CD4-positive, alpha-beta T cell (primary cell): ENCODE measurements at regions of chr1 and their contacts with region 1.

Region 1: DNA sequence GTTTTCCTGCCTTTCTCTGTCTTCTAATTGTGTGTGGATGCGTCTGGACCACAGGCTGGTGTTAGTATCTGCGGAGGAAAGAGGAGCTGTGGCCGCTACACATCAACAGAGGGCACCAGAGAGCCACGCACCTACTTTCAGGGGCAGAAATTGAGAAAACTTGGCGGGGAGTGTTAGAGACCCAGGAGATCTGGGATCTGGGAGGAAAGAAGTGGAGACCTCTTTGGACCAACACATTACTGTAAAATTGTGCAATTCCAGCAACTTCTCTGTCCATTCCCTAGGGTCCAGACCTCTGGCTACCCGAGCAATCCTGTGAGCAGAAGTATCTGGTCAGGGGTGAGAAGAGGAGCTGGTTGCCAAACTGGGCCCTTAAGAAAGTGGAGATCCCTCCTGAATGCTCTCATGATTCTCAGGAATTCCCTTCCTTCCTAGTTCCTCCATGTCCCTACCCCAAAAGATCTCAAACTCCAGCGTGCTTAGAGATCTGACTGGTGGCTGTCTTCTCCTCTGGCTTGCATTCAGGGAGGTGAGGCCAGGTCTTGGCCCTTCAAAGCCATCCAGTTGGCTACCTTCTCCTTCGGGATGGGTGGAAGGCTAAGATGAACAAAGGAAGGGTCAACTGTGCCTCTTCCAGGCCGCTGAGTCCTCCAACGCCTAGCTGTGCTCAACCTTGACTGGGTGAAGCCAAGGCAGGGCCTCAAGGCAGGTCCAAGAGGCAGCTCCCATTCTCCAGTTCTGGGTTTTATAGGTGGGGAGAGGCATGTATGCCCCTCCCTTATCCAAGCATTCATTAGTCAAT is 1.2 kb upstream of the KIRREL1 start:
- DNase-seq: peak in 12 of 14 experiments; percentile 5 to 54 (median 16)
- ATAC-seq: peak; percentile 48
- H3K4me3 ChIP-seq: no peak overlapping the region
- H3K4me3 Mint-ChIP-seq: no peak overlapping the region
- H3K27ac ChIP-seq: no peak overlapping the region
- H3K27ac Mint-ChIP-seq: no peak overlapping the region
- H3K4me1 ChIP-seq: peaks cover 9% of the 10 kb centered on the region
- H3K4me1 Mint-ChIP-seq: no peaks in the 10 kb centered on the region
- H3K27me3 ChIP-seq: peaks cover 21 to 41% of the 10 kb centered on the region in 2 experiments
- H3K27me3 Mint-ChIP-seq: peaks cover 62% of the 10 kb centered on the region
- CTCF ChIP-seq: peak; percentile 65

Region 2: DNA sequence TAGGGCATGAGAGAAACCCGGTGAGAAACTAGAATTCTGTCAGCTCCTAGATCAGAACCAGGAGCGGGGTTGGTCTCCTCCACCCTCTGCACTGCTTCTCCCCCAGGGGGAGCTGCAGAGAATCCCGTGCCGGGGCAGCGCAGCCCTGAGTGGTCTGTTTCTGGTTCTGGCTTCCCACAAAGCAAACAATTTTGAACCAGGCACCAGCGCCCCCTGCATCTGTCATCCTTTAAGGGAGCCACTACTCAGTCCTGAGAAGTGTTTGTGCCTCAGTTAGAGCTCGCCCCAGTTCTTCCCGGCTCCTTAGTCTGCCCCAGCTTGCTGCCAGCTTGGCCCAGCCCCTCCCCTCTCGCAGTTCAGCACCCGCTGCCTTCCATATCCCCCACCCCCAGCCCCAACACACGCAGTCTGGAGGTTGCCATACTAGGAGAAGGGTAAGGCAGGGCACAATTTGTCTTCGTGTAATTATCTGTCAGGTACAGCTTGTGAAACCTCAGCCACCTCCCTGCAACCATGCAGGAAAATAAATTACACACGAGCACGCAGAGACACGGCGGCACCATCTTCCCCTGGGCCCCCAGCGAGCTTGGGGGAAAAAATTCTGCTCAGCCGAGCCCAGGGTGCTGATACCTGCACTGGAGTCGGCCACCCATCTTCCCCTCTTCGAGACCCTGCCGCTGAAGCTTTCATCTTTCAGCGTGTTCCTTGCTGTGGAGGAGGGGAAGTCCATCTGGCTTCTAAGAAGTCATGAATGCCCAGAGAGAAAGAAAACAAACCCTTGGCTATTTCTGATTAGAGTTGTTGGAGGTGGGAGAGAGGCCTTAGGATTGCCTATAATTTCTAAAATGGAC is 125.8 kb after region 1 on chr1:
- CTCF ChIA-PET with region 1: interaction called, 3 read pairs
- POLR2A ChIA-PET with region 1: no interaction called
- intact Hi-C with region 1: loop called in 1 of 2 experiments (anchors 2 kb)
- DNase-seq: peak in 10 of 14 experiments; percentile 6 to 64 (median 44)
- ATAC-seq: peak; percentile 90
- H3K4me3 ChIP-seq: no peak overlapping the region
- H3K4me3 Mint-ChIP-seq: peak overlapping the region; percentile 16
- H3K27ac ChIP-seq: no peak overlapping the region
- H3K27ac Mint-ChIP-seq: no peak overlapping the region
- H3K4me1 ChIP-seq: peaks cover 16% of the 10 kb centered on the region
- H3K4me1 Mint-ChIP-seq: peaks cover 9% of the 10 kb centered on the region
- H3K27me3 ChIP-seq: peaks cover 32 to 44% of the 10 kb centered on the region in 2 experiments
- H3K27me3 Mint-ChIP-seq: peaks cover 60% of the 10 kb centered on the region
- CTCF ChIP-seq: peak; percentile 59

Region 3: DNA sequence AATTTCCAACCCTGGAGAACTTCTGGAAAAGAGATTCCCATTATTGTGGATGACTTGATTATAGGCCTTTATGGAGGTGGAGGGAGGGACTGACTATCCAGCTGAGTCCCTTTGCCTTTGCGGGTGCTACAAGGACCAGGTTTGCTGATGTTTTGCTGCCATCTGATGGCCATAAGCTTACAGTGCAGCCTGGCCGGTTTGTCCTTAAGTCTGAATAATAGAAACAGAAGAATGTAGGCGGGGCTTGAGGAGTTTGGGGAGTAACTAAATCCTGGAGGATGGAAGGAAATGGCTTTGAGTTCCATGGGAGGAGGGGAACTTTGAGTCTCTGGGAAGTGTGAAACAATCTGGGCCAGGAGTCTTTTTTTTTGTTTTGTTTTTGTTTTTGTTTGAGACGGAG is 132.8 kb after region 1 on chr1:
- CTCF ChIA-PET with region 1: interaction called, 3 read pairs
- POLR2A ChIA-PET with region 1: interaction called, 3 read pairs
- intact Hi-C with region 1: loop called (anchors 1 kb)
- DNase-seq: peak; percentile 42 to 85 (median 58)
- ATAC-seq: peak; percentile 94
- H3K4me3 ChIP-seq: no peak overlapping the region
- H3K4me3 Mint-ChIP-seq: no peak overlapping the region
- H3K27ac ChIP-seq: no peak overlapping the region
- H3K27ac Mint-ChIP-seq: no peak overlapping the region
- H3K4me1 ChIP-seq: no peaks in the 10 kb centered on the region
- H3K4me1 Mint-ChIP-seq: no peaks in the 10 kb centered on the region
- H3K27me3 ChIP-seq: peaks cover 10 to 19% of the 10 kb centered on the region in 2 experiments
- H3K27me3 Mint-ChIP-seq: peaks cover 41% of the 10 kb centered on the region
- CTCF ChIP-seq: peak; percentile 79

Region 4: DNA sequence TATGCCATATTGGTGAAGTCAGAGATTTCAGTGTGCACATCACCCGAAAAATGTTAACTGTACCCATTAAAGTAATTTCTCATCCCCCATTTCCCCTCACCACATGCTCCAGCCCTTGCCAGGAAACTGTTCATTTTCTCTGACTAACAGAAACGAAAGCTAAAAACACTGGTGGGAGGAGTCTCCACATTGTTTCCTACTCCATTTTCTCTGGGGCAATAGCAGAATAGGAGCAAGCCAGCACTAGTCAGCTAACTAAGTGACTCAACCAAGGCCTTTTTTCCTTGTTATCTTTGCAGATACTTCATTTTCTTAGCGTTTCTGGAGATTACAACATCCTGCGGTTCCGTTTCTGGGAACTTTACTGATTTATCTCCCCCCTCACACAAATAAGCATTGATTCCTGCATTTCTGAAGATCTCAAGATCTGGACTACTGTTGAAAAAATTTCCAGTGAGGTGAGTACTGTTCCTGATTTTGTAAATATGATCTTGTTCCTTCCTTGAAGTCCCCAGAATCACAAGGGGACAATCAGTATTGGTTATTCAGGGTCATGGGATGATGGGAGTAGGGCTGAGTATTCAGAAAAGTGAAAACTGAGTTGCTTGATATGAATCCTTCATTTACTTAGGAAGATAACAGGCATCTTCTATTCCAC is 1017.6 kb after region 1 on chr1 and contains the start of gene IFI16:
- CTCF ChIA-PET with region 1: no interaction called
- POLR2A ChIA-PET with region 1: no interaction called
- intact Hi-C with region 1: loop called in 1 of 2 experiments (anchors 10 kb)
- DNase-seq: peak in 11 of 14 experiments; percentile 22 to 92 (median 55)
- ATAC-seq: peak; percentile 81
- H3K4me3 ChIP-seq: peak within 1 kb of the TSS; percentile 69
- H3K4me3 Mint-ChIP-seq: peak within 1 kb of the TSS; percentile 98
- H3K27ac ChIP-seq: peak within 1 kb of the TSS; percentile 72 to 92
- H3K27ac Mint-ChIP-seq: peak within 1 kb of the TSS; percentile 96
- H3K4me1 ChIP-seq: peaks cover 28% of the 10 kb centered on the region
- H3K4me1 Mint-ChIP-seq: peaks cover 66% of the 10 kb centered on the region
- H3K27me3 ChIP-seq: no peaks in the 10 kb centered on the region
- H3K27me3 Mint-ChIP-seq: no peaks in the 10 kb centered on the region
- CTCF ChIP-seq: no peak
- total RNA-seq, gene IFI16: 36.9 to 37.6 TPM